GM18951 (cell line): ENCODE measurements at regions of chr7 and their contacts with region 1.

Region 1: GRCh38 chr7:155598810-155599210 is 45.7 kb upstream of the RBM33 start:
- POLR2A ChIP-seq: no peak

Region 2: GRCh38 chr7:155769701-155770100 is 170.9 kb after region 1 on chr7:
- in situ Hi-C with region 1: loop called (anchors 5 kb)
- POLR2A ChIP-seq: no peak

Region 3: GRCh38 chr7:156198277-156198676 is 599.5 kb after region 1 on chr7:
- in situ Hi-C with region 1: no loop called
- POLR2A ChIP-seq: no peak